ENCODE measurements at regions of chr14 and their contacts with region 1.

Region 1: GRCh38 chr14:22556990-22557623 is 31.9 kb downstream of the DAD1 start:
- DNase-seq: peak; percentile 90
- H3K4me3 Mint-ChIP-seq: peak overlapping the region; percentile 76
- H3K27ac Mint-ChIP-seq: peak overlapping the region; percentile 95
- H3K4me1 Mint-ChIP-seq: peaks cover 90% of the 10 kb centered on the region
- H3K27me3 Mint-ChIP-seq: peaks cover 2% of the 10 kb centered on the region

Region 2: DNA sequence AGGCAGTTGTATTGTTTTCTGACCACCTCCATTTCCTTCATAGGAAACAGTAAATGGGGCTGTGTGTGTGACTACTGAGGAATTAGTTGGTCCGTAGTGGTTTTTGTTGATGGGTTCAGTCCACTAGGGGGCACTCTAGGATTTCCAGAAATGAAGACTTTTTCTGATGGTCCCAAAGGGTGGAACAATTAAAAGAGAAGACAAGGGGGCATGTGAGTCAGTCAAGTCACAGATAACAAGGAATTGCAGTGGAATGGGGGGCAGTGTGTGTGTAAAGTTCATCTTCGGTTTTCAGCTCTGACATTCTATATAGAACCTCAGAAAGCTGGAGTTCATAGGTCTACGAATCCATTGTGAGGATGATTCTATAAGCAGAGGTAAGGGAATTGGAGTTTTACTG is 696.9 kb before region 1 on chr14:
- CTCF ChIA-PET with region 1: no interaction called
- POLR2A ChIA-PET with region 1: interaction called, 21 read pairs
- DNase-seq: peak; percentile 51
- H3K4me3 Mint-ChIP-seq: peak overlapping the region; percentile 51
- H3K27ac Mint-ChIP-seq: peak overlapping the region; percentile 24
- H3K4me1 Mint-ChIP-seq: peaks cover 9% of the 10 kb centered on the region
- H3K27me3 Mint-ChIP-seq: peaks cover 14% of the 10 kb centered on the region

Region 3: GRCh38 chr14:21997300-21997699 is 559.8 kb before region 1 on chr14:
- CTCF ChIA-PET with region 1: interaction called, 22 read pairs
- POLR2A ChIA-PET with region 1: interaction called, 16 read pairs
- DNase-seq: peak; percentile 57
- H3K4me3 Mint-ChIP-seq: peak overlapping the region; percentile 82
- H3K27ac Mint-ChIP-seq: peak overlapping the region; percentile 85
- H3K4me1 Mint-ChIP-seq: peaks cover 27% of the 10 kb centered on the region
- H3K27me3 Mint-ChIP-seq: peaks cover 2% of the 10 kb centered on the region

Region 4: DNA sequence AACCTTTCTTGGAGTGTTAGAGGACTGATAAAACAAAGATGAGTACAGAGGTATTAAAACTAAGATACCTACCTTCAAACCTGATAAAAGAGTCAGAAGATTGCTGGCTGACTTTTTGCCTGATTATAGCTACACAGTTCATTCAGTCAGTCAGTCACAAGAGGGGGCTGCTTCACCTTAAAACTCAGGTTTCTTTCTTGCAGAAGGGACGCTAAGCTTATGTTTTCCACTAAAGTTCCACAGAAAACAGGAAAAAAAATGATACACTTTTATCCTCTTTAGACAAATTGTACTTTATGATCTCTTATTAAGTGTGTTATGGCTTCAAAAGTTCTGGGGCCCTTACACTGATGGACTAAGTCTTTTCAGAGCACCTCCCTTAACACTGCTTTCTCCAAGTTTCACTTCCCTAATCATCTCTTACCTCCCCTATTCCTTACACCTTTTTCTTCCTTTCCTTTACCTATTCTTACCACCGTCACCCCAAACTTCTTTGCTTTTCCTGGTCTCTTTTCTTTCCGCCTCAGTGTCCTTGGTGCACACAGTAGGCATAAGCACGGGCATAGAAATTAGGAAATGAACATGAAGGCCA is 434.8 kb before region 1 on chr14:
- CTCF ChIA-PET with region 1: interaction called, 3 read pairs
- POLR2A ChIA-PET with region 1: interaction called, 22 read pairs
- DNase-seq: no peak
- H3K4me3 Mint-ChIP-seq: peak overlapping the region; percentile 80
- H3K27ac Mint-ChIP-seq: peak overlapping the region; percentile 82
- H3K4me1 Mint-ChIP-seq: peaks cover 22% of the 10 kb centered on the region
- H3K27me3 Mint-ChIP-seq: no peaks in the 10 kb centered on the region

Region 5: GRCh38 chr14:22536853-22537338 is 20.2 kb before region 1 on chr14:
- CTCF ChIA-PET with region 1: interaction called, 55 read pairs
- POLR2A ChIA-PET with region 1: interaction called, 630 read pairs
- DNase-seq: peak; percentile 84
- H3K4me3 Mint-ChIP-seq: peak overlapping the region; percentile 69
- H3K27ac Mint-ChIP-seq: peak overlapping the region; percentile 87
- H3K4me1 Mint-ChIP-seq: peaks cover 95% of the 10 kb centered on the region
- H3K27me3 Mint-ChIP-seq: no peaks in the 10 kb centered on the region

Region 6: DNA sequence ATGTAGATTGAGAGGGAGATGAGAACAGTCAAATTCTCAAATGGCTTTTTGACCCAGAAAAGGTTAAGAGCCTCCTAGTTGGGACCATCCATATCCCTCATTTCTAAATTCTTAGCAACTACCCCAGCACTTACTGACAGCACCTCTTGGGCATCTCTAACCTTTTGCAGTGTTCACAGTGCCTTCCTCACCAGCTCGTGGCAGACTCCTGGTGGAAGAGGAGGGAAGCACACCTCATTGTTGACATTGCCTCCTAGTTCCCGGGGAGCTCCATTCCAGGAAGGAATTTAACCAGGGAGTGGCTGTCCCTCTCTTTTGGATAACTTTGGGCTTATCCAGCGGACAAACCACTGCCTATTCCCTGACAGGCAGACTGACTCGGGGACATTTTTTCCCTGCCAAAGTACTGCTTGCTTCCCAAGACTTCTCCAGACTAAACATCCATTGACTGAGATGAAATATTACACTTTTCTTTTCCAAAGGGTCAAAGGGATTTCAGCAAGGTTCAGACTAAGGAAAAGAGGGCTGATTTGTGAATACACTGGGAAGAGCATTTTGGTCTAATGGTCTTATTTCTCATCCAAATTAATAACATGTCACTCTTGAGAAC is 96.0 kb after region 1 on chr14:
- CTCF ChIA-PET with region 1: interaction called, 12 read pairs
- POLR2A ChIA-PET with region 1: no interaction called
- DNase-seq: peak; percentile 54
- H3K4me3 Mint-ChIP-seq: no peak overlapping the region
- H3K27ac Mint-ChIP-seq: no peak overlapping the region
- H3K4me1 Mint-ChIP-seq: no peaks in the 10 kb centered on the region
- H3K27me3 Mint-ChIP-seq: no peaks in the 10 kb centered on the region

Region 7: GRCh38 chr14:22872033-22872832 is 315.1 kb after region 1 on chr14:
- CTCF ChIA-PET with region 1: interaction called, 3 read pairs
- POLR2A ChIA-PET with region 1: interaction called, 10 read pairs
- DNase-seq: peak; percentile 76
- H3K4me3 Mint-ChIP-seq: peak overlapping the region; percentile 86
- H3K27ac Mint-ChIP-seq: peak overlapping the region; percentile 97
- H3K4me1 Mint-ChIP-seq: peaks cover 39% of the 10 kb centered on the region
- H3K27me3 Mint-ChIP-seq: no peaks in the 10 kb centered on the region

Measured in activated CD4-positive, alpha-beta memory T cell treated with anti-CD3 and anti-CD28 coated beads, Interleukin-2, amount 10 ng/mL, durations not matched to agents 7 days and 5 days (primary cell).